Endothelial cell of umbilical vein (primary cell): ENCODE measurements at regions of chr5 and their contacts with region 1.

Region 1: GRCh38 chr5:157743163-157744050 is at the start of gene LSM11:
- DNase-seq: peak; percentile 93
- H3K4me3 ChIP-seq: peak within 1 kb of the TSS; percentile 57 to 67 (median 67)
- H3K27ac ChIP-seq: peak within 1 kb of the TSS; percentile 58
- H3K4me1 ChIP-seq: peaks cover 14% of the 10 kb centered on the region
- H3K27me3 ChIP-seq: no peaks in the 10 kb centered on the region
- CTCF ChIP-seq: peak; percentile 99
- POLR2A ChIP-seq: no peak
- total RNA-seq, gene LSM11: 6.1 and 7.3 TPM in 2 replicates

Region 2: GRCh38 chr5:157253547-157253946 is 489.9 kb before region 1 on chr5:
- CTCF ChIA-PET with region 1: interaction called, 4 read pairs
- POLR2A ChIA-PET with region 1: no interaction called
- dilution Hi-C with region 1: no loop called
- intact Hi-C with region 1: loop called (anchors 5 kb)
- DNase-seq: peak; percentile 57
- H3K4me3 ChIP-seq: no peak overlapping the region
- H3K27ac ChIP-seq: no peak overlapping the region
- H3K4me1 ChIP-seq: no peaks in the 10 kb centered on the region
- H3K27me3 ChIP-seq: peaks cover 3% of the 10 kb centered on the region in 2 experiments
- CTCF ChIP-seq: peak; percentile 70 to 78
- POLR2A ChIP-seq: no peak

Region 3: GRCh38 chr5:157342822-157343402 is 400.5 kb before region 1 on chr5:
- CTCF ChIA-PET with region 1: interaction called, 13 read pairs
- POLR2A ChIA-PET with region 1: no interaction called
- dilution Hi-C with region 1: no loop called
- intact Hi-C with region 1: loop called (anchors 1 kb)
- DNase-seq: peak; percentile 28
- H3K4me3 ChIP-seq: no peak overlapping the region
- H3K27ac ChIP-seq: no peak overlapping the region
- H3K4me1 ChIP-seq: no peaks in the 10 kb centered on the region
- H3K27me3 ChIP-seq: peaks cover 0 to 3% of the 10 kb centered on the region in 2 experiments
- CTCF ChIP-seq: peak; percentile 65
- POLR2A ChIP-seq: no peak

Region 4: DNA sequence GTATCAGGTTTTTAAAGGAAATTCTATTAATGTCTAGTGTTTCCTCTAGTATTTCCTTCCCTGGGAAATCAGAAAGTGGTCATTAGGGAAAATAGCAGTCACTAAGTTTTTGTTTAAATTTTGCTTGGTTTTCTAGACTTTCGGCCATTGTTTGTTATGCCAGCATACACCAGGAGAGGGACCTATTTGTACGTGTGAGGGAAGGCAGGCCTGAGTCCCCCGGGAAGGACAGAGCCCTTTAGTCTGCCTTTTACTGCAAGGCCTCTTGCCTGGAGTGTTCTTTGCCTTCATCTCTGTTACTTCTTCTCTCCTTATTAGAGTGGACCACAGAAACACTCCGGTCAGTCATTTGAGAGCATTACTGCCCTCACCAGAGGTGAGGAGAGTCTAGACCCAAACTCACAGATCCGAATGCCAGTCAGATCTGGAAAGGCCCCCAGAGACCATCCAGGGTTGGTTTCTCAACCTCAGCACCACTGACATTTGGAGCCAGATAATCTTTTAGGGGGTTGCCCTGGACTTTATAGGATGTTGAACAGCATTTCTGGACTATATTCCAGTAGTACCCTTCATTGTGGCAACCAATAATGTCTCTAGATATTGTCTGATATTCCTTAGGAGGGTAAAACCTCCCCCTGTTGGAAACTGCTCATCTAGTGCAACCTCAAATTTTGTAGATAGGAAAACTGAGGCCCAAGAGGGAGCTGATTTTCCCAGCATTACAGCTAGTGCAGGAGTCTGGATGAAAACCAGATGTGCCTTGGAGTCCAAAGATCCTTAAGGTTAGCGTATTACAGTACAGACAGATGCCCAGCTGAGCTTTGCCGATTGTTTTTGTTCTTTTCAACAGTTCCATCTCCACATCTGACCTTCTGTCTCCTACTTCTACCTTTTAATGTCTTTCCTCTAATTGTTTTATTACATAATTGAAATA is 376.4 kb before region 1 on chr5:
- CTCF ChIA-PET with region 1: interaction called, 11 read pairs
- POLR2A ChIA-PET with region 1: no interaction called
- dilution Hi-C with region 1: no loop called
- intact Hi-C with region 1: loop called (anchors 1 kb)
- DNase-seq: peak; percentile 70
- H3K4me3 ChIP-seq: no peak overlapping the region
- H3K27ac ChIP-seq: no peak overlapping the region
- H3K4me1 ChIP-seq: no peaks in the 10 kb centered on the region
- H3K27me3 ChIP-seq: no peaks in the 10 kb centered on the region
- CTCF ChIP-seq: peak; percentile 60 to 71
- POLR2A ChIP-seq: no peak

Region 5: GRCh38 chr5:157431544-157432200 is 311.7 kb before region 1 on chr5:
- CTCF ChIA-PET with region 1: interaction called, 20 read pairs
- POLR2A ChIA-PET with region 1: no interaction called
- dilution Hi-C with region 1: no loop called
- intact Hi-C with region 1: loop called (anchors 1 kb)
- DNase-seq: peak; percentile 64
- H3K4me3 ChIP-seq: no peak overlapping the region
- H3K27ac ChIP-seq: no peak overlapping the region
- H3K4me1 ChIP-seq: no peaks in the 10 kb centered on the region
- H3K27me3 ChIP-seq: no peaks in the 10 kb centered on the region
- CTCF ChIP-seq: peak; percentile 16 to 20
- POLR2A ChIP-seq: no peak

Region 6: GRCh38 chr5:157651623-157652549 is 91.5 kb before region 1 on chr5 and contains the start of gene SOX30:
- CTCF ChIA-PET with region 1: interaction called, 6 read pairs
- POLR2A ChIA-PET with region 1: no interaction called
- dilution Hi-C with region 1: no loop called
- intact Hi-C with region 1: loop called (anchors 1 kb)
- DNase-seq: peak; percentile 46
- H3K4me3 ChIP-seq: peak within 1 kb of the TSS in 2 of 3 experiments; percentile 22 to 38
- H3K27ac ChIP-seq: no peak within 1 kb of the TSS
- H3K4me1 ChIP-seq: no peaks in the 10 kb centered on the region
- H3K27me3 ChIP-seq: no peaks in the 10 kb centered on the region
- CTCF ChIP-seq: peak; percentile 20 to 50
- POLR2A ChIP-seq: no peak
- total RNA-seq, gene SOX30: not detected in 2 replicates

Region 7: DNA sequence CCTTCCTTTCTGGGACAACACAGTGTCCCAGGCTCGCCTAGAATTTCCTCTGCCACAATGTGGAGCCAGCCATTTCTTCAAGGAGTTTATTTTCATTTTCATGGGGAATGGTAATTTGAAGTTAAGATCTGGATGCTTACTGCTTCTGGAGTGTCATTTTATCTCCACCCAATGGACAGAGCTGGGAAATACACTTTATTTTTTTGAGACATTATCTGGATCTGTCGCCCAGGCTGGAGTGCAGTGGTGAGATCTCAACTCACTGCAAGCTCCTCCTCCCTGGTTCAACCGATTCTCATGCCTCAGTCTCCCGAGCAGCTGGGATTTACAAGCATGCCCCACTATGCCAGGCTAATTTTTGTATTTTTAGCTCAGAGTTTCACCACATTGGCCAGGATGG is 24.9 kb before region 1 on chr5:
- CTCF ChIA-PET with region 1: interaction called, 15 read pairs
- POLR2A ChIA-PET with region 1: no interaction called
- dilution Hi-C with region 1: no loop called
- intact Hi-C with region 1: loop called (anchors 1 kb)
- DNase-seq: peak; percentile 78
- H3K4me3 ChIP-seq: no peak overlapping the region
- H3K27ac ChIP-seq: no peak overlapping the region
- H3K4me1 ChIP-seq: no peaks in the 10 kb centered on the region
- H3K27me3 ChIP-seq: no peaks in the 10 kb centered on the region
- CTCF ChIP-seq: peak; percentile 46 to 56
- POLR2A ChIP-seq: no peak